ENCODE measurements at regions of chr7 and their contacts with region 1.

Region 1: GRCh38 chr7:47771336-47771989 is 176.8 kb downstream of the PKD1L1 start:
- DNase-seq: no peak
- H3K4me3 ChIP-seq: no peak overlapping the region
- H3K27ac ChIP-seq: peak overlapping the region; percentile 39 to 72 (median 61)
- H3K4me1 ChIP-seq: peaks cover 0 to 31% (median 22%) of the 10 kb centered on the region in 4 donors
- H3K27me3 ChIP-seq: no peaks in the 10 kb centered on the region
- CTCF ChIP-seq: peak in 1 of 3 experiments; percentile 43
- EP300 ChIP-seq: no peak
- POLR2A ChIP-seq: no peak

Region 2: DNA sequence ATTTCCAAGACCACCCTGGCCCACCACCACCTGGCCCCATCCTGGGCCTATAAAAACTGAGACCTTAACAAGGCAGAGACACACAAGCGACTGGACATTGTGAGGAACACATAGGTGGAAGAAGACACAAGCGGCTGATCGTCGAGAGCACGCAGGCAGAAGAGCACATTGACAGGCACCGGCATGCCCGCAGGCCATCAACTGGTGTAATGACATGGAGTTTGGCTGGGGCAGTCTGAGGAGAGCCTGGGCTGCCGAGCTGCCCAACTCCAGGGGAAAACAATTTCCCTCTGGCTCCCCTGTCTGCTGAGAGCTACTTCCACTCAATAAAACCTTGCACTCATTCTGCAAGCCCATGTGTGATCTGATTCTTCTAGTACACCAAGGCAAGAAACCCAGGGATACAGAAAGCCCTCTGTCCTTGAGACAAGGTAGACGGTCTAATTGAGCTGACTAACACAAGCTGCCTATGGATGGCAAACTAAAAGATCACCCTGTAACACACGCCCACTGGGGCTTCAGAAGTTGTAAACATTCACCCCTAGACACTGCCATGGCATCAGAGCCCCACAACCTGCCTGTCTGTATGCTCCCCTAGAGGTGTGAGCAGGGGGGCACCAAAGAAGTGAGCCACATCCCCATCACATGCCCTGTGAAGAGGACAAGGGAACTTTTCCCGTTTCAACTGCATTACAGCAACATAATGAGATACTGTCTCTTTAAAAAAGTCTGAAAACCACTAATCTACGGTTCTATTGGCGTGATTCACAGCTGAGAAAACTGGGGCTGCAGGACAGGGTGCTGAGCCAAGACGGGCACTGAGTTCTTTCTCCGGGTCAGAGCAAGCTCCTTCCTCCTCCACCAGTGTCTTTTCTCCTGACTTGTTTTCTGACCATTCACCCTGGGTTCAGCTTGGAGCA is 171.0 kb before region 1 on chr7:
- intact Hi-C with region 1: loop called (anchors 10 kb)
- DNase-seq: no peak
- H3K4me3 ChIP-seq: no peak overlapping the region
- H3K27ac ChIP-seq: no peak overlapping the region
- H3K4me1 ChIP-seq: peaks cover 13 to 69% (median 60%) of the 10 kb centered on the region in 4 donors
- H3K27me3 ChIP-seq: no peaks in the 10 kb centered on the region
- CTCF ChIP-seq: no peak
- EP300 ChIP-seq: no peak
- POLR2A ChIP-seq: no peak

Region 3: GRCh38 chr7:47846117-47846836 is 74.8 kb after region 1 on chr7:
- intact Hi-C with region 1: no loop called
- DNase-seq: no peak
- H3K4me3 ChIP-seq: no peak overlapping the region
- H3K27ac ChIP-seq: no peak overlapping the region
- H3K4me1 ChIP-seq: peaks cover 0 to 9% (median 3%) of the 10 kb centered on the region in 4 donors
- H3K27me3 ChIP-seq: no peaks in the 10 kb centered on the region
- CTCF ChIP-seq: no peak
- EP300 ChIP-seq: no peak
- POLR2A ChIP-seq: no peak